Left colon (tissue), 2 donors: ENCODE measurements at regions of chr15 and their contacts with region 1.

Region 1: GRCh38 chr15:20340931-20341661 is 200.5 kb downstream of the GOLGA6L6 start:
- DNase-seq: peak; percentile 34 to 71
- ATAC-seq: peak; percentile 14

Region 2: DNA sequence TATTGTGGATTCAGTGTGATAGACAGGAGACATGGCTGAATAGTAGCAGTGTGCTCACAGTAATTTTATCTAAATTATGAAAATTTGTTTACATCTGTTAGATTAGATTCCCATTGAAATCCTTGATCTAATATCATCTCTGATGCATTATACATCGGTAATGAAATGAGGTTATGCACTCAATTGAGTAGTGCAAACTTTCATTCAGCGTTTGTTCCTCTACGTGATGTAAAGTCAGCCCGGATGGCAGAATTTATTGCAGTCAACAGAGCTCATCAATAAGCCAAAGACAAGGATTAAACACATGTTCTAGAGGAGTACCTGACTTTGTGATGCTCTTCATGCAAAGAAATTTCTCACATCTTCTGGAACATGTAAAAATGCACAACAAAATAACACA is 348.7 kb before region 1 on chr15:
- intact Hi-C with region 1: no loop called
- DNase-seq: no peak
- ATAC-seq: no peak

Region 3: DNA sequence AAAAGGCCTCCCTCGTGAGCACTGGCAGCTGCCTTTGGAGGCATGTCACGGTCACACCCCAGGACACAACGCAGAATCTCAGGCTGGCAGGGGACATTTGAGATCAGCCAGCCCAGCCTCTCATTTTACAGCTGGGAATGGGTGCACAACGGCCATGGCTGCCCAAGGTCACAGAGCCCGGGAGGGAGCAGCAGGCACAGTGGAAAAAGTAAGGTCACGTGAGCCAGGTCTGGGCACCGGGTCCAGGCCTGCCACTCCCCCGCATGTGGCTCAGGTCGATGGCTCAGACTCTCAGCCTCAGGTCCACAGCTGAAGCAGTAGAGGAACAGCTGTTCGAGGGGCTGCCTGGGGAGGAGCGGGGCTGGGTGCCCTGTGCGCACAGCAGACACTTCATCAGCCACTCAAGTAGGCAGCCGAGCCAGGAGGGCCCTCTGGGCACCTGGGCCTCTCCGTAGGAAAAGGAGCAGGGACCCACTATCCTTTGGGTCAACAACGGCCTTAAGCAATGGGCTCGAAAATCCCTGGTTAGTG is 60.1 kb before region 1 on chr15:
- intact Hi-C with region 1: loop called in 1 of 2 experiments (anchors 5 kb)
- DNase-seq: no peak
- ATAC-seq: no peak